ENCODE measurements at regions of chr1 and their contacts with region 1.

Region 1: GRCh38 chr1:53485478-53486394 is 26.5 kb downstream of the DMRTB1 start:
- DNase-seq: peak; percentile 82 to 95
- H3K4me3 ChIP-seq: no peak overlapping the region
- H3K27ac ChIP-seq: no peak overlapping the region
- H3K4me1 ChIP-seq: peaks cover 0 to 7% (median 4%) of the 10 kb centered on the region in 4 donors
- H3K27me3 ChIP-seq: peaks cover 0 to 42% (median 28%) of the 10 kb centered on the region in 3 donors
- CTCF ChIP-seq: peak in 5 of 7 experiments; percentile 75 to 85 (median 77)
- EP300 ChIP-seq: no peak
- POLR2A ChIP-seq: no peak

Region 2: DNA sequence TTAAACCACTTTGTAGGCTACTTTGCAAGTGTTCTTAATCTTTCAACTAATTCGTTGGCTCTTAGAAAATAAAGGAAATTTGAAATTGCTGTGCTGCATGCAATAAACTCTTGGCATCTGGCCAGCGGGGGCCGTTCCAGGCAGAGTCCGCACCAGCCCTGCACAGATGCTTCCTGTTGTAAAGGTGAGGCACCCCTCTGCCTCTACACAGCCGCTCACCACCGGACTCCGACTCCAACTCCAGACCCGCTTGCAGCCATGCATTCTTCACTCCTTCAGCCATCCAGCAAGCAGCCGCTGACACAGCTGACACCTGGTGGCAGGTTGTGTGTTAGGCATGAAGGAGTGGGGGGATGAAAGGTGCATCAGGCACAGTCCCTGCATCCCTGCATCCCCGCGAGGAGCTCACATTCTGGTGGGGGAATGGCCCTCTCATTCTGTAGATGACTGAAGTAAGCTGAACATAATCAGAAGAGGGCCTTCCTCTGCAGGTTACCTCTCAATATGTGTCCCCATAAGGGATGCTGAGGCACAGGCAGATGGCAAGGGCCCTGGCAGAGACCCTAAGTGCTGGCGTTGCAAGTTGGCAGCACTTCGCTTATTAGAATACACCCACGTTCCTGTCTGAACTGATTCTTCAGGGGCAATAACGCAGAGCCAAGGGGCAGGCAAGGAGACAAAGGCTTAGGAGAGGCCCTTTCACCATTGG is 196.4 kb after region 1 on chr1:
- intact Hi-C with region 1: loop called (anchors 10 kb)
- DNase-seq: peak; percentile 48 to 79
- H3K4me3 ChIP-seq: no peak overlapping the region
- H3K27ac ChIP-seq: no peak overlapping the region
- H3K4me1 ChIP-seq: peaks cover 0 to 22% (median 14%) of the 10 kb centered on the region in 4 donors
- H3K27me3 ChIP-seq: peaks cover 0 to 60% (median 22%) of the 10 kb centered on the region in 3 donors
- CTCF ChIP-seq: peak in 3 of 7 experiments; percentile 22 to 52 (median 39)
- EP300 ChIP-seq: no peak
- POLR2A ChIP-seq: no peak

Region 3: DNA sequence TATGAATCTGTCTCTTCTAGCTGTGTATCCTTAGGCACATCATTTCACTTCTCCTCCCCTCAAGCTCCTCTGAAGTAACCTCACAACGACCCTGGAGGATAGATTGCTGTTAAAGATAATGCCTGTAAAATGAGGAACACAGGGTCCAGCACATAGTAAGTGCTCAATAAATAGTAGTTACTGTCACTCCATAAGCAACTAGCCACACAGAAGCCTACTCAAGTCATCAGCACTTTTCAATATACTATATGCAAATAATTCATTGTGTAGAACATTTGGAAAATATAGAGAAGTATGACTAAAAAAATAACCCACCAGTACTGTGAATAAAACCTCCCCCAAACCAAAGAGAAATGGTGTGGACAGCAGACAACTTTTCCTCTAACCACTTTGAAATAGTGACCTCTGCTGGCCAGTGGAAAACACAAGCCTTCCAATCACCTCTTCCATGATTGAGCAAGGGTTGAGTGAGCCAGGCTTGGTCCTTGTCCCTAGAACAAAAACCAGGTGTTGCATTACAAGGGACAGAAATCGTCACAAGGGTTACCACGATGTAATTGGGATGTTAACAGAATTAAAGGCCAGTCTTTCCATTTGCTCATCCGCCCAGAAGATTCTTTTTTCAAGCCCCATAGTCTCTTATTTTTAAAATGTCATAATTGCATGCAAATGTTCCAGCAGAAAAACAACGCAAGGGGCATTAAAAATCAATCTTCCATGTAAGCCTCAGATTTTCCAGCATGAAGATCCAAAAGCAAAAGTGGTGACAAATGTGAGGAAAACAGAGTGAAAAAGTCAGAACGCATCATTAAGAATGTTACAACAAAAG is 269.0 kb after region 1 on chr1:
- intact Hi-C with region 1: loop called (anchors 5 kb)
- DNase-seq: peak in 1 of 2 donors; percentile 71
- H3K4me3 ChIP-seq: no peak overlapping the region
- H3K27ac ChIP-seq: no peak overlapping the region
- H3K4me1 ChIP-seq: no peaks in the 10 kb centered on the region
- H3K27me3 ChIP-seq: no peaks in the 10 kb centered on the region
- CTCF ChIP-seq: peak in 5 of 7 experiments; percentile 29 to 63 (median 53)
- EP300 ChIP-seq: no peak
- POLR2A ChIP-seq: no peak

Measured in stomach (tissue), 19 donors.